Left cardiac atrium (tissue), 4 donors: ENCODE measurements at regions of chr22 and their contacts with region 1.

Region 1: GRCh38 chr22:17554814-17555213 is 8.5 kb upstream of the SLC25A18 start:
- DNase-seq: no peak
- ATAC-seq: no peak

Region 2: GRCh38 chr22:17501679-17502285 is 53.0 kb before region 1 on chr22:
- intact Hi-C with region 1: no loop called
- DNase-seq: no peak
- ATAC-seq: peak; percentile 90

Region 3: DNA sequence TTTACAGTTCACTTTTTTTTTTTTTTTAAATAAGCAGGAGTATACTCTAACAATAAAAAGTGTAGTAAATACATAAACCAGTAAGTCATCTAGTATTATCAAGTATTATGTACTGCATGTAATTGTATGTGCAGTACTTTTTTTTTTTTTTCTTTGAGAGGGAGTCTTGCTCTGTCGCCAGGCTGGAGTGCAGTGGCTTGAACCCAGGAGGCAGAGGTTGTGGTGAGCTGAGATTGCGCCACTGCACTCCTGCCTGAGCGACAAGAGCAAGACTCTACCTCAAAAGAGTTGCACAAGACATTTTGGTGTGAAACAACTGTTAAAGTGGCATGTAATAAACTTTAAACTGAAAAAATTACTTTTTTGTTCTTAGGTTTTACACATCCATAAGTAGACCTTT is 100.5 kb after region 1 on chr22:
- intact Hi-C with region 1: no loop called
- DNase-seq: no peak
- ATAC-seq: no peak

Region 4: DNA sequence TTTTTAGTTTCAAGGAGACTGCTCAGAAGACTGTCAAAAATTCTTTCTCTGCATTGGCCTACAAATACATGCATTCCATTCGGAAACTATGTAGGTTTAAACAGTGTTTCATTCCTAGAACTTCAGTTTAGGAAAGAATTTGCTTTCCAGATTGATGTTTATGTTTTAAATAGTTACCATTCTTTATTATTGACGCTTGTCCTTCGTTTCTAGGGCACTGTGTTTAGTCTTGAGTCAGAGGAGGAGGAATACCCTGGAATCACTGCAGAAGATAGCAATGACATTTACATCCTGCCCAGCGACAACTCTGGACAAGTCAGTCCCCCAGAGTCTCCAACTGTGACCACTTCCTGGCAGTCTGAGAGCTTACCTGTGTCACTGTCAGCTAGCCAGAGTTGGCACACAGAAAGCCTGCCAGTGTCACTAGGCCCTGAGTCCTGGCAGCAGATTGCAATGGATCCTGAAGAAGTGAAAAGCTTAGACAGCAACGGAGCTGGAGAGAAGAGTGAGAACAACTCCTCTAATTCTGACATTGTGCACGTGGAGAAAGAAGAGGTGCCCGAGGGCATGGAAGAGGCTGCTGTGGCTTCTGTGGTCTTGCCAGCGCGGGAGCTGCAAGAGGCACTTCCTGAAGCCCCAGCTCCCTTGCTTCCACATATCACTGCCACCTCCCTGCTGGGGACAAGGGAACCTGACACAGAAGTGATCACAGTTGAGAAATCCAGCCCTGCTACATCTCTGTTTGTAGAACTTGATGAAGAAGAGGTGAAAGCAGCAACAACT is 171.8 kb after region 1 on chr22:
- intact Hi-C with region 1: loop called in 1 of 2 experiments (anchors 5 kb)
- DNase-seq: no peak
- ATAC-seq: peak; percentile 18 to 23

Region 5: GRCh38 chr22:17785185-17786184 is 230.7 kb after region 1 on chr22:
- intact Hi-C with region 1: loop called in 1 of 2 experiments (anchors 5 kb)
- DNase-seq: peak; percentile 59
- ATAC-seq: peak; percentile 13 to 32